CD4-positive, alpha-beta T cell (primary cell): ENCODE measurements at regions of chr11 and their contacts with region 1.

Region 1: DNA sequence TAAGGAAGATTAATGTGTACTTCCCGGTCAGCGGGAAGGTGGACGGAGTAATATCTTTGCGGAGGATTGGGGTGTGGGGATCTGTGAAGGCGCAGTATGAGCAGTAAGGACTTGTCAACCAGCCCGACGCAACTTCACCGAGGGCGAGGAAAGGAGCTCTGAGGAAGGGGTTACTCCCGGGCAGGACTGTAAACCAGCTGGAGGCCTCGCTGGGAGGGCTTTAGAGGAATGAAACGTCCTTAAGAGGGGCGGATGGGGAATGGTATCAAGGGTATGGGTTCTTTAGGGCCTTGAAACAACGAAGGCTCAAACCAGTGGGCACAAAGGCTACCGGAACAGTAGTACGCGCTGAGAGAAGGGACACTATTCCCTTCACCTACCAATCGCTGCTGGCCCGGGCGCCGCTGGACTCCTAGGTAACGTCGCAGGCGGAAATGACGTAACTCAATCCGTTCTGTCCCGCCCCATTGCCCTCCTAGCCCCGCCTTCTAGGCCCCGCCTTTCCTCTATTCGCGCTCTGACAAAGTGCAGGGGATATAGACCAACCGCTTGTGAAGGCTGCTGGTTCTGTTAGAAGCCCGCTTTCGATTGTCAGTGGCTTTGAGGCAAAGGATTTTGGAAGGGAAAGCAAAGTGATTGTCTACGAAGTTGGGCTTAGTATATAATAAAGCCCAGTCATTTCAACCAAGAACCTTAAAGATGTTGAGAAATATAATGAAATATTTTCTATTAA is at the start of gene C11orf65:
- DNase-seq: peak; percentile 92 to 98 (median 94)
- ATAC-seq: peak; percentile 94
- H3K4me3 ChIP-seq: peak within 1 kb of the TSS; percentile 73
- H3K4me3 Mint-ChIP-seq: peak within 1 kb of the TSS; percentile 95
- H3K27ac ChIP-seq: peak within 1 kb of the TSS; percentile 90 to 98
- H3K27ac Mint-ChIP-seq: peak within 1 kb of the TSS; percentile 99
- H3K4me1 ChIP-seq: peaks cover 12% of the 10 kb centered on the region
- H3K4me1 Mint-ChIP-seq: peaks cover 19% of the 10 kb centered on the region
- H3K27me3 ChIP-seq: no peaks in the 10 kb centered on the region
- H3K27me3 Mint-ChIP-seq: no peaks in the 10 kb centered on the region
- CTCF ChIP-seq: no peak
- total RNA-seq, gene C11orf65: 0.30 to 0.75 TPM

Region 2: GRCh38 chr11:107457558-107458271 is 1009.5 kb before region 1 on chr11 and contains the start of gene CWF19L2:
- CTCF ChIA-PET with region 1: no interaction called
- POLR2A ChIA-PET with region 1: interaction called, 3 read pairs
- intact Hi-C with region 1: loop called in 1 of 2 experiments (anchors 10 kb)
- DNase-seq: peak; percentile 74 to 97 (median 86)
- ATAC-seq: peak; percentile 92
- H3K4me3 ChIP-seq: peak within 1 kb of the TSS; percentile 92
- H3K4me3 Mint-ChIP-seq: peak within 1 kb of the TSS; percentile 91
- H3K27ac ChIP-seq: peak within 1 kb of the TSS; percentile 73 to 79
- H3K27ac Mint-ChIP-seq: peak within 1 kb of the TSS; percentile 82
- H3K4me1 ChIP-seq: peaks cover 7% of the 10 kb centered on the region
- H3K4me1 Mint-ChIP-seq: peaks cover 37% of the 10 kb centered on the region
- H3K27me3 ChIP-seq: no peaks in the 10 kb centered on the region
- H3K27me3 Mint-ChIP-seq: peaks cover 5% of the 10 kb centered on the region
- CTCF ChIP-seq: no peak
- total RNA-seq, gene CWF19L2: 21.2 to 21.8 TPM

Region 3: DNA sequence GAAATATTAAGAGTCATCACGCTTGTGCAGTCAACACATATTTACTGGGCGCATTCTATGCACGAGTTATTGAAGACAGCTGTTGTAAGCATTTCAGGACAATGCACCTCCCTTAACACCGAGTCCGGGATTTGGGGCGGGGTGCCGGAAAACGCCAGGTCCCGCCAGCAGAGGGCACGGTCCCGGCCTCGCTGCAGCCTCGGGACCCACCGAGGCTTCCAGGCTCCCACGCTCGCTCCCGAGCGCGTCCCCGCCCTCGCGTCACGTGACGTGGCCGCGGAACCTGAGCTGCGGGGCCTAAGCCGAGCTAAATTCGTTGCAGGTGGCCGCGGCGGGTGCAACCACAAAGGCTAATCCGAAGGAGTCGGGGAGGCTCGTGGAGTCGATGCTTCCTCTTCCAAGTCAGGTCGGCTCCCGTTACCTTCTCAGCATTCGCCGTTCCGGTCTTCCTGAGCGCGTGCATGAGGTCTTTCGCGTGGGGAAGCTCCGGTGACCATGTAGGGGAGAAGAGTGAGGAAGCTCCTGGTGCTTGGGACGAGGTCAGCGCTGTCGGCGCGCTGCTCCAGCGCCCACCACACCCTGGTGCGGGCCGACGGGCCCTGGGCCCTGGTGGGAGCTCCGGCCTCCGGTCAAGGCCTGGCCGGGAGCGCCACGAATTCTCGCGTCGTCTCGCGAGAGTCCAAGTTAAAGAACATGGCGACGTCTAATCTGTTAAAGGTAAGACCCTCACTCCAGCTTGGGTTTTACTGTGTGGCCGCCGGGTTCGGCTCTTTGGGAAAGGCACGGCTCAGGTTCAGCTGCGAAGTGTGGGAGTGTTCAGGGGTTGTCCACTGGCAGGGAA is 458.4 kb before region 1 on chr11 and contains the start of gene CUL5:
- CTCF ChIA-PET with region 1: no interaction called
- POLR2A ChIA-PET with region 1: no interaction called
- intact Hi-C with region 1: loop called in 1 of 2 experiments (anchors 5 kb)
- DNase-seq: peak; percentile 76 to 95 (median 86)
- ATAC-seq: peak; percentile 86
- H3K4me3 ChIP-seq: peak within 1 kb of the TSS; percentile 89
- H3K4me3 Mint-ChIP-seq: peak within 1 kb of the TSS; percentile 99
- H3K27ac ChIP-seq: peak within 1 kb of the TSS; percentile 91 to 94
- H3K27ac Mint-ChIP-seq: peak within 1 kb of the TSS; percentile 93
- H3K4me1 ChIP-seq: peaks cover 15% of the 10 kb centered on the region
- H3K4me1 Mint-ChIP-seq: peaks cover 16% of the 10 kb centered on the region
- H3K27me3 ChIP-seq: no peaks in the 10 kb centered on the region
- H3K27me3 Mint-ChIP-seq: no peaks in the 10 kb centered on the region
- CTCF ChIP-seq: peak; percentile 86
- total RNA-seq, gene CUL5: 65.5 to 67.6 TPM

Region 4: DNA sequence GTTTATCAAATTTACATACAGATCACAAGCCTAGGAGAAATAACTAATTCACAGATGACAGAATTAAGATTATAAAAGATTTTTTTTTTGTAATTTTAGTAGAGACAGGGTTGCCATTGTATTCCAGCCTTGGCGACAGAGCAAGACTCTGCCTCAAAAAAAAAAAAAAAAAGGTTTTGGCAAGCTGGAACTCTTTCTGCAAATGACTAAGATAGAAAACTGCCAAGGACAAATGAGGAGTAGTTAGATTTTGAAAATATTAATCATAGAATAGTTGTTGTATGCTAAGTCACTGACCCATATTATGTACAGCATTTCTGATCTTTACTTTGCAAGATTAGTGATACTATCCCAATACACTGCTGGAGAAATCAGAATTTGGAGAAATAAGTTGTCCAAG is 99.1 kb before region 1 on chr11:
- CTCF ChIA-PET with region 1: no interaction called
- POLR2A ChIA-PET with region 1: no interaction called
- intact Hi-C with region 1: no loop called
- DNase-seq: no peak
- ATAC-seq: no peak
- H3K4me3 ChIP-seq: no peak overlapping the region
- H3K4me3 Mint-ChIP-seq: no peak overlapping the region
- H3K27ac ChIP-seq: no peak overlapping the region
- H3K27ac Mint-ChIP-seq: no peak overlapping the region
- H3K4me1 ChIP-seq: no peaks in the 10 kb centered on the region
- H3K4me1 Mint-ChIP-seq: no peaks in the 10 kb centered on the region
- H3K27me3 ChIP-seq: no peaks in the 10 kb centered on the region
- H3K27me3 Mint-ChIP-seq: no peaks in the 10 kb centered on the region
- CTCF ChIP-seq: no peak

Region 5: GRCh38 chr11:108491936-108492335 is 24.7 kb after region 1 on chr11:
- CTCF ChIA-PET with region 1: interaction called, 3 read pairs
- POLR2A ChIA-PET with region 1: interaction called, 12 read pairs
- intact Hi-C with region 1: loop called (anchors 1 to 2 kb)
- DNase-seq: no peak
- ATAC-seq: no peak
- H3K4me3 ChIP-seq: no peak overlapping the region
- H3K4me3 Mint-ChIP-seq: no peak overlapping the region
- H3K27ac ChIP-seq: no peak overlapping the region
- H3K27ac Mint-ChIP-seq: no peak overlapping the region
- H3K4me1 ChIP-seq: peaks cover 5% of the 10 kb centered on the region
- H3K4me1 Mint-ChIP-seq: peaks cover 18% of the 10 kb centered on the region
- H3K27me3 ChIP-seq: no peaks in the 10 kb centered on the region
- H3K27me3 Mint-ChIP-seq: no peaks in the 10 kb centered on the region
- CTCF ChIP-seq: no peak

Region 6: GRCh38 chr11:108593214-108593922 is 126.1 kb after region 1 on chr11 and contains the start of gene EXPH5:
- CTCF ChIA-PET with region 1: no interaction called
- POLR2A ChIA-PET with region 1: interaction called, 10 read pairs
- intact Hi-C with region 1: loop called (anchors 2 kb)
- DNase-seq: peak; percentile 66 to 96 (median 87)
- ATAC-seq: peak; percentile 92
- H3K4me3 ChIP-seq: peak within 1 kb of the TSS; percentile 84
- H3K4me3 Mint-ChIP-seq: peak within 1 kb of the TSS; percentile 99
- H3K27ac ChIP-seq: peak within 1 kb of the TSS in 1 of 2 donors; percentile 37
- H3K27ac Mint-ChIP-seq: peak within 1 kb of the TSS; percentile 83
- H3K4me1 ChIP-seq: peaks cover 15% of the 10 kb centered on the region
- H3K4me1 Mint-ChIP-seq: peaks cover 24% of the 10 kb centered on the region
- H3K27me3 ChIP-seq: no peaks in the 10 kb centered on the region
- H3K27me3 Mint-ChIP-seq: peaks cover 9% of the 10 kb centered on the region
- CTCF ChIP-seq: no peak
- total RNA-seq, gene EXPH5: 2.0 to 3.7 TPM

Region 7: DNA sequence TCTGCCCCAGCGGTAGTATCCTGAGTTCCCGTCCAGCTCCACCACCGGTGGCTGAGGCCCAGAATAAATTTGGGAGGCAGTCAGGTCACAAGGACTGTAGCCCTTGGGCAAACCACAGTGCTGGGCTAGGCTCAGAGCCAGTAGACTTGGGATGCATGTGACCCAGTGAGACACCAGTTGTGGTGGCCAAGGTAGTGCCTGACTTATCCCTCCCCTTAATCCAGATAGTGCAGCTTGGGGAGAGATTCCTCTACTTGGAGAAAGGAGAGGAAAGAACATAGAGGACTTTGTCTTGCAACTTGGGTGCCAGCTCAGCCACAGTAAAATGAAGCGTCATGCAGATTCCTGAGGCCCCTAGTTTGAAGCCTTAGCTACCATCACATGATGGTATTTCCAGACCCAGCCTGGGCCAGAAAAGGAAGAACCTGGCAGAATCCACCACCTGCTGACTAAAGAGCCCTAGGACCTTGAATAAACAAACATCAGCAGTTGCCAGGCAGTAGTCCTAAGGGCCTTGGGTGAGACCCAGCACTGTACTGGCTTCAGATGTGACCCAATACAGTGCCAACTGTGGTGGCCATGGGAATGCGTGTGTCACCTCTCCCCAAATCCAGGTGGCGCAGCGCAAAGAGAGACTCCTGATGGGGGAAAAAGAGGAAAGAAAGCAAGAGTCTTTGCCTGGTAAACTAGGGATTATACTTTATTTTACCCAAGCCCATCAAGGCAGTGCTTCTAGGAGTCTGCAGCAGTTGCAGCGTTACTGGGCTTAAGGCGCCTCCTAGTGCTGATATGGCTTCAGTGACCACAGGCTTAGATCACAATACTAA is 180.7 kb after region 1 on chr11:
- CTCF ChIA-PET with region 1: no interaction called
- POLR2A ChIA-PET with region 1: no interaction called
- intact Hi-C with region 1: no loop called
- DNase-seq: peak; percentile 42 to 82 (median 56)
- ATAC-seq: peak; percentile 96
- H3K4me3 ChIP-seq: no peak overlapping the region
- H3K4me3 Mint-ChIP-seq: no peak overlapping the region
- H3K27ac ChIP-seq: no peak overlapping the region
- H3K27ac Mint-ChIP-seq: no peak overlapping the region
- H3K4me1 ChIP-seq: no peaks in the 10 kb centered on the region
- H3K4me1 Mint-ChIP-seq: no peaks in the 10 kb centered on the region
- H3K27me3 ChIP-seq: no peaks in the 10 kb centered on the region
- H3K27me3 Mint-ChIP-seq: no peaks in the 10 kb centered on the region
- CTCF ChIP-seq: peak; percentile 78